ENCODE measurements at regions of chr2 and their contacts with region 1.

Region 1: DNA sequence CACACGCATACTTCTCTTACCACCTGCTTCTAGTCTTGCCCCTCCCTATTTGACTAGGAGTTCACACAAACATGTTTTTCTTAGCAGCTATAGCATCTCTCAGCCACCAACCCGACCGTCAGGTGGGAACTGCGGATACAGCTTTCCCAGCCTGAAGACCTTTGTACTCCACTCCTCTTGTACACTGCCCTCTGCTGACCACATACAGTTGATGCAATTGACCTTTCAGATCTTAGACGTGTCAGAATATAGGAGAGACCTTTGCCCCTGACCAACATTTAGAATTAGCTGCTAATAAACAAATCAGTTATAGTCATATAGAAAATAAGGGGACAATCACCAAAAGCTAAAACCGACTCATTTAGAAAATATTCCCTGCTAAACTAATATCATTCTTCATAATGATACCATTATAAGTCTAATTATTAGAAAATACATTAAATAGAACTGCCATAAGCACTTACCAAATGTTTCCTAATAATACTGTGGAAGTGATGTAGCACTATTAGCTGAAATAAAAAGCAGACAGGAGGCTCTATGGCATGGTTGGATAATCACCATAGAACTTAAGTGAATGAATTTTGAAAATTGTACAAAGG is 208.4 kb downstream of the RAD51AP2 start:
- DNase-seq: peak; percentile 54 to 73 (median 66)
- ATAC-seq: peak; percentile 94
- H3K4me3 ChIP-seq: no peak overlapping the region
- H3K27ac ChIP-seq: no peak overlapping the region
- H3K4me1 ChIP-seq: no peaks in the 10 kb centered on the region
- H3K27me3 ChIP-seq: no peaks in the 10 kb centered on the region
- CTCF ChIP-seq: peak; percentile 67 to 77 (median 74)
- EP300 ChIP-seq: no peak
- POLR2A ChIP-seq: no peak
- RAD21 ChIP-seq: peak; percentile 80 to 81

Region 2: GRCh38 chr2:16625201-16625729 is 684.6 kb before region 1 on chr2:
- CTCF ChIA-PET with region 1: no interaction called
- POLR2A ChIA-PET with region 1: no interaction called
- in situ Hi-C with region 1: loop called (anchors 25 kb)
- intact Hi-C with region 1: loop called (anchors 10 kb)
- DNase-seq: peak in 2 of 4 experiments; percentile 29 to 67
- ATAC-seq: peak; percentile 70
- H3K4me3 ChIP-seq: no peak overlapping the region
- H3K27ac ChIP-seq: peak overlapping the region; percentile 74; the same call in 2 of the 3 replicates
- H3K4me1 ChIP-seq: peaks cover 17 to 48% of the 10 kb centered on the region in 2 experiments
- H3K27me3 ChIP-seq: no peaks in the 10 kb centered on the region
- CTCF ChIP-seq: no peak
- EP300 ChIP-seq: peak; percentile 54
- POLR2A ChIP-seq: no peak
- RAD21 ChIP-seq: no peak; a peak in 1 of 4 replicates

Region 3: DNA sequence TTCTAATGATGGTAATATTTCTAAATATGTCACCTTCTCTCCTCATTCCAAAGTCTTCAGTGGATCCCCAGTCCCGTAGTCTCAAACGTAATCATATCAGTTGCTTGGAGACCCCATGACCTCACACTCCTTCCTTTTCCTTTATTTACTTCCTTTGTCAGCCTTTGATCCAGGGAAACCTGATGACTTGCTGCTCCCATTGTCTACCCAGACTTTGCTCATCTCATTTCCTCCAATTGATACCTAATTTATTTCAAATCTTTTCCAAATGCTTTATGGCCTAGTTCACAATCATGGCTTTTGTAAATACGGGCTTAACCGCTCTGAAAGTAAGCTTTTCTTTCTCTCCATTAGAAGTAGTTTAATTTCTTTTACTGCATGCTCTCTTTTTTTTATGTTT is 241.8 kb before region 1 on chr2:
- CTCF ChIA-PET with region 1: no interaction called
- POLR2A ChIA-PET with region 1: no interaction called
- in situ Hi-C with region 1: no loop called
- intact Hi-C with region 1: loop called (anchors 10 kb)
- DNase-seq: no peak
- ATAC-seq: no peak
- H3K4me3 ChIP-seq: no peak overlapping the region
- H3K27ac ChIP-seq: no peak overlapping the region
- H3K4me1 ChIP-seq: no peaks in the 10 kb centered on the region
- H3K27me3 ChIP-seq: no peaks in the 10 kb centered on the region
- CTCF ChIP-seq: no peak
- EP300 ChIP-seq: no peak
- POLR2A ChIP-seq: no peak
- RAD21 ChIP-seq: no peak

Region 4: DNA sequence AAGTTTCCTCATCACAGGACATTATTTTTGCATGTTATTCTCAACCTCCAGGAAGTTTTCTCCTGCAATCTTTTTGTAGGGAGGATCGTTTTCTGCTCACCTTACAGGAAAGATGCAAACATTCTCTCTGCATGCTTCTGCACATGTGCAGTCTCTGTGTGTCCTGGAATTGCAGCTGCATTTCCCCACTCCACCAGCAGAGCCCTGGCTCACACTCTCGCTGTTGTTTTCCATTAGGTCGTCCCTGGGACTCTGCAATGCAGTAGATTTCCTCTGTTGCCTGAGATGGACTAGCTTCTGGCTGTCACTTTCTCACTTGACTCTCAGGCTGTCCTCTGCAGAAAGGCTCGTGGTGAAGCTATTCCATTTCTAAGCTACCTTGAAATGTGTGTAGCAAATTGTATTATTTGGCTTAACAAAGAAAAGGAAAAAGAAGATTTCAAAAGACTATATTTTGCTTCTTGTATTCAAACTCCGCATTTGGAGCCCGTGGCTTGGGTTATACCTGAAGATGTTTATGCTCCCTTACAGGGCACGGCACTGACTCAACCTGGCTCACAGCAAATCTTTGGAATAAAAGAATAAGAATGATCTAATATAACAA is 138.3 kb before region 1 on chr2:
- CTCF ChIA-PET with region 1: no interaction called
- POLR2A ChIA-PET with region 1: no interaction called
- in situ Hi-C with region 1: no loop called
- intact Hi-C with region 1: loop called (anchors 10 kb)
- DNase-seq: peak in 2 of 4 experiments; percentile 14 to 53
- ATAC-seq: peak; percentile 99
- H3K4me3 ChIP-seq: no peak overlapping the region
- H3K27ac ChIP-seq: no peak overlapping the region
- H3K4me1 ChIP-seq: no peaks in the 10 kb centered on the region
- H3K27me3 ChIP-seq: no peaks in the 10 kb centered on the region
- CTCF ChIP-seq: peak; percentile 46 to 67 (median 48)
- EP300 ChIP-seq: no peak
- POLR2A ChIP-seq: no peak
- RAD21 ChIP-seq: peak in 1 of 2 experiments; percentile 8; a peak in 1 of 4 replicates

Region 5: GRCh38 chr2:17460371-17461086 is 150.7 kb after region 1 on chr2:
- CTCF ChIA-PET with region 1: no interaction called
- POLR2A ChIA-PET with region 1: no interaction called
- in situ Hi-C with region 1: no loop called
- intact Hi-C with region 1: no loop called
- DNase-seq: no peak
- ATAC-seq: no peak
- H3K4me3 ChIP-seq: no peak overlapping the region
- H3K27ac ChIP-seq: no peak overlapping the region
- H3K4me1 ChIP-seq: no peaks in the 10 kb centered on the region
- H3K27me3 ChIP-seq: no peaks in the 10 kb centered on the region
- CTCF ChIP-seq: no peak
- EP300 ChIP-seq: no peak
- POLR2A ChIP-seq: no peak
- RAD21 ChIP-seq: no peak

Region 6: DNA sequence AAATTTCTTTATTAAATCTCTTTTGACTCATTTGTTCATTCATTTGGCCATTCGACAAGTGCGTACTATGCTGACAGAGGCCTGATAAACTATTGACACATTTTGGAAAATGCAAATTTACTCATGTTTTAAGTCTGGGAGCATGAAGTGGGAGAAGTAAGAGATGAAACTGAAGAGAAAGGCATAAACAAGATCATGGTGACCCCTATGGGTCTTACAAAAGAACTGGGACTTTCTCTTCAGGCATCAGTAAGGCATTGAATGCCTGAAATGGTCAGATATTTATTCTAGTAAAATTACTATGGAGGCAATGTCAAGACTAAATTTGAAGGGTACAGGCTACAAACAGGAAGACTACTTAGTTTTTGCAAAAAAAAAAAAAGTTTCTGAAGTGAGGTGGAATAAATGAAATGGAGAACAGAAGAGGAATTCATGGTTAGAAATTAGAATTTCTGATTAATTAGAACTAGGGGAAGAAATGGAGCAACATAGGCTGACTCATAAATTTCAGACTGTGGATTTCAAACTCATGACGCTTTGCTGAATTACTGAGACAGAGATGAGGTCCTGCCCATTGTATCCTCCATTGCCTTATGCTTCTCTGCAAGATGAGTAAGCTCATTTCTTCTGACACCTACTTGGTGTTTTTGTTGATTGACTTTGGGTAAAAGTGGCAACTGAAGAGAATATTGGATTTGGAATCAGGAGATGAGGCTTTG is 263.4 kb after region 1 on chr2:
- CTCF ChIA-PET with region 1: no interaction called
- POLR2A ChIA-PET with region 1: no interaction called
- in situ Hi-C with region 1: no loop called
- intact Hi-C with region 1: no loop called
- DNase-seq: no peak
- ATAC-seq: peak; percentile 54; the same call in 1 of the 3 replicates
- H3K4me3 ChIP-seq: no peak overlapping the region
- H3K27ac ChIP-seq: no peak overlapping the region
- H3K4me1 ChIP-seq: no peaks in the 10 kb centered on the region
- H3K27me3 ChIP-seq: 0 out of 5 replicates have a peak, but pooled peaks cover 0 to 4% of the 10 kb centered on the region in 2 experiments
- CTCF ChIP-seq: peak in 1 of 3 experiments; percentile 14; a peak in 2 of 6 replicates
- EP300 ChIP-seq: no peak
- POLR2A ChIP-seq: no peak
- RAD21 ChIP-seq: peak in 1 of 2 experiments; percentile 67; a peak in 3 of 4 replicates

Region 7: DNA sequence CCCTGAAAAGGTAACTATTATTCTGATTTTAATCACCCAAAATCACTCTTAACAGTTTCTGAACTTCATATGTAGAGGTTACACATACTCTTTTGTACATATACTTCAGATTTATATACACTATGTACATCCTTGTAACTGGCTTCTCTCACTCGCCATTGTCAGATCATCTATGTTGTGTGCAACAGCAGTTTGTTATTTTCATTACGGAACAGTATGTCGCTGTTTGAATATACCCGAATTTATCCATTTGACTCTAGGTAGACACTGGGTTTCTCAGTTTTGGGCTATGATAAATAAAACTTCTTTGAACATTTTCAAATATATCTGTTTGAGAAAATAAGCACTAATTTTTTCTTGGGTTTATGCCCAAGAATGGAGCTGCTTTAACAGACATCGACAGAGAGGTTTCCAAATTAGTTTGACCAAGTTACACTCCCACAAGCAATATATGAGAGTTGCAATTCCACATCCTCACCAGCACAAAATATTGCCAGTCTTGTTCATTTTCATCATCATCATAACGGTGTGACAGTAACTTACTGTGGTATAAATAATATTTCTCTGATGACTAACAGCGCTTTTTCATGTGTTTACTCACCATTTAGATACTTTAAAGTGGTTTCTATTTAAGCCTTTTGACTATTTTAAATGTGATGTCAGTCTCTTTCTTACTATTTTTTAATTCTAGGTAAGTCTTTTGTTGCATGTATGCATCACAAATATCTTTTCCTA is 362.9 kb after region 1 on chr2:
- CTCF ChIA-PET with region 1: interaction called, 3 read pairs
- POLR2A ChIA-PET with region 1: no interaction called
- in situ Hi-C with region 1: no loop called
- intact Hi-C with region 1: loop called (anchors 10 kb)
- DNase-seq: no peak
- ATAC-seq: peak; percentile 70
- H3K4me3 ChIP-seq: no peak overlapping the region
- H3K27ac ChIP-seq: no peak overlapping the region
- H3K4me1 ChIP-seq: no peaks in the 10 kb centered on the region
- H3K27me3 ChIP-seq: no peaks in the 10 kb centered on the region
- CTCF ChIP-seq: no peak
- EP300 ChIP-seq: no peak
- POLR2A ChIP-seq: no peak
- RAD21 ChIP-seq: no peak